ENCODE measurements at regions of chr11 and their contacts with region 1.

Region 1: GRCh38 chr11:75142714-75143419 is 8.0 kb upstream of the SLCO2B1 start:
- DNase-seq: peak in 1 of 2 experiments; percentile 27
- H3K4me3 ChIP-seq: no peak overlapping the region
- H3K27ac ChIP-seq: no peak overlapping the region
- H3K4me1 ChIP-seq: no peaks in the 10 kb centered on the region
- H3K27me3 ChIP-seq: no peaks in the 10 kb centered on the region
- CTCF ChIP-seq: no peak
- EP300 ChIP-seq: no peak
- POLR2A ChIP-seq: no peak
- RAD21 ChIP-seq: no peak

Region 2: GRCh38 chr11:75014129-75014528 is 128.7 kb before region 1 on chr11:
- CTCF ChIA-PET with region 1: interaction called, 12 read pairs
- POLR2A ChIA-PET with region 1: no interaction called
- DNase-seq: no peak
- H3K4me3 ChIP-seq: no peak overlapping the region
- H3K27ac ChIP-seq: no peak overlapping the region
- H3K4me1 ChIP-seq: no peaks in the 10 kb centered on the region
- H3K27me3 ChIP-seq: no peaks in the 10 kb centered on the region
- CTCF ChIP-seq: no peak
- EP300 ChIP-seq: no peak
- POLR2A ChIP-seq: no peak
- RAD21 ChIP-seq: no peak

Region 3: DNA sequence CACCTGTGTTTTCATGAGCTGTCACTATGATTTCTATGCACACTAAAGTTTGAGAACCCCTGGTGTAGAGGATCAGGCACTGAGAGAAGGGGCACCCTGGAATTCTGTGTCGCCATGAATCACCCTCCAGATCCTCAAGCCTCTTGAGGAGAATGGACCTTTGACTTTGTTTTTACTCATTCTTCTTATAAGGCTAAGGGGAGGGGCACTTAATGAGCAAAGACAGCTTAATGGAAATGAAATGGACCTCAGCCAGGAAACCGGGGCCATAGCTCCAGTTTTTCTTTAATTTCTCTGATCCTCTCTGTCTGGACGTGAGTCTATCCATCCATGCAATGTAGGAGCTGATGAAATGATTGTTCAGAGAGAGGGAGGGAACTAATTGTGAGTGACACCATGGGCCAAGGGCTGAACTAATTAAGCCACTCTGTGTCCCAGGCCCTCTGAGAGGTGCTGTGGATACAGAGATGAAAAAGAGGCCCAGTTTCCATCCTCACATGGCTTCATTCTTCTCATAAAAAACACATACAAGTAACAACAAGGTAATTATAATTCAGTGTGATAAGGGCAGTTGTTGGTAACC is 79.0 kb before region 1 on chr11:
- CTCF ChIA-PET with region 1: interaction called, 13 read pairs
- POLR2A ChIA-PET with region 1: no interaction called
- DNase-seq: no peak
- H3K4me3 ChIP-seq: no peak overlapping the region
- H3K27ac ChIP-seq: no peak overlapping the region
- H3K4me1 ChIP-seq: no peaks in the 10 kb centered on the region
- H3K27me3 ChIP-seq: no peaks in the 10 kb centered on the region
- CTCF ChIP-seq: no peak
- EP300 ChIP-seq: no peak
- POLR2A ChIP-seq: no peak
- RAD21 ChIP-seq: no peak

Region 4: DNA sequence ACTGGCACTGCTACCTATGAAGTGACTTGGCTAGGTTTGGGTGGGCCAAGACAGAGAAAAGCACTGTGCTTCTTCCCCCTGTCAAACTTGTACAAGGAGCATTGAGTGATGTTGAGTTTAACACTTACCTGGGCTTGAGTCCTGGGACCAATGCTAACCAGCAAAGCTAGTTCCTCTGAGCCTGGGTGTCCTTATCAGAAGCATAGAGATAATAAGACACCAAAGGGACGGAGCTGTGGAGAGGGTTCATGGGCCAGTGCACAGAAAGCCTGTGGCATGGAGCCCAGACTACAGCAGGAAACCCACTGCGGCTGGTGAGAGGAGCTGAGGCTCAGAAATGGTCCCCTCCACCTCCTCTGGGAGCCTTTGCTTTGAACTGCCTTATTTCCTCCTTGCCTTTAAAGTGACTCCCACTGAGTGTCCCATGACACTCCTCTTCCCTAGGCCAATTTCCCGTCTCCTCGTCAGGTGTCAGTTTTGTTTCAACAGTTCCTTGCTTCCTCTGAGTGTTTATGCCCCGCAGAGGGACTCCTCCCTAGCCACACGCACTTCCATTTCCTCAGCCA is 17.4 kb after region 1 on chr11:
- CTCF ChIA-PET with region 1: interaction called, 189 read pairs
- POLR2A ChIA-PET with region 1: interaction called, 3 read pairs
- DNase-seq: no peak
- H3K4me3 ChIP-seq: no peak overlapping the region
- H3K27ac ChIP-seq: no peak overlapping the region
- H3K4me1 ChIP-seq: no peaks in the 10 kb centered on the region; a peak in 1 of 7 replicates
- H3K27me3 ChIP-seq: no peaks in the 10 kb centered on the region
- CTCF ChIP-seq: no peak
- EP300 ChIP-seq: no peak
- POLR2A ChIP-seq: no peak
- RAD21 ChIP-seq: no peak

Region 5: GRCh38 chr11:75204685-75205563 is 62.1 kb after region 1 on chr11:
- CTCF ChIA-PET with region 1: interaction called, 825 read pairs
- POLR2A ChIA-PET with region 1: interaction called, 3 read pairs
- DNase-seq: peak; percentile 58 to 97
- H3K4me3 ChIP-seq: no peak overlapping the region
- H3K27ac ChIP-seq: no peak overlapping the region
- H3K4me1 ChIP-seq: 0 out of 7 replicates have a peak, but pooled peaks cover 0 to 2% (median 0%) of the 10 kb centered on the region in 4 experiments
- H3K27me3 ChIP-seq: no peaks in the 10 kb centered on the region; a peak in 1 of 7 replicates
- CTCF ChIP-seq: peak; percentile 90 to 97 (median 93)
- EP300 ChIP-seq: no peak
- POLR2A ChIP-seq: no peak
- RAD21 ChIP-seq: peak; percentile 91 to 96

Region 6: DNA sequence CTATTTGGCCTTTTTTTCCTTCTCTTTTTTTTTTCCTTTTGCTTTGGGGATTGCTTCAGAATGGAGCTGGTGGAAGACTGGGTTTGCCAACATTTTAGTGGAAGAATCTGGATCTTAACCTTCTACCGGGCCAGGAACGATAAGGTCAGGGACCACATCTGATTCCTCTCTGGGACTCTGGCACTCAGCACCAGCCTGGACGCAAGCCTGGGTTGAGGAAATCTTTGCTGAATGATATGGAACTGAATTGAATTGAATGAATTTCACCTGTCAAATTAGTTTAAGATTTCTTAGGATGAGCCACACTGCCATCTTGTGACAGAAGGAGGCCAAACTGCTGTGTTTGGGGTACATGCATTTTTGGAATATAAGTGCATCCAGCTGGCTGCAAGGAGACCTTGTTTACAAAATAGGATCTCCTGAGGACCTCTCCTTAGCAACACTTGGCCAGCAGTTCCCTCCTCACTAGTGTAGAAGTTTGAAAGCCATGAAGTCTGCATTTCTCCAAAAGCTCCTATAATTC is 128.1 kb after region 1 on chr11:
- CTCF ChIA-PET with region 1: interaction called, 18 read pairs
- POLR2A ChIA-PET with region 1: no interaction called
- DNase-seq: no peak
- H3K4me3 ChIP-seq: no peak overlapping the region
- H3K27ac ChIP-seq: no peak overlapping the region
- H3K4me1 ChIP-seq: peaks cover 0 to 2% (median 0%) of the 10 kb centered on the region in 4 experiments; a peak in 1 of 7 replicates
- H3K27me3 ChIP-seq: no peaks in the 10 kb centered on the region
- CTCF ChIP-seq: peak in 2 of 3 experiments; percentile 41 to 60; a peak in 3 of 4 replicates
- EP300 ChIP-seq: no peak
- POLR2A ChIP-seq: no peak
- RAD21 ChIP-seq: peak; percentile 47 to 60